ENCODE measurements at regions of chr2 and their contacts with region 1.

Region 1: GRCh38 chr2:41657226-41657625 is 390.6 kb upstream of the PKDCC start:
- DNase-seq: no peak
- ATAC-seq: no peak
- H3K4me3 Mint-ChIP-seq: no peak overlapping the region
- H3K27ac Mint-ChIP-seq: no peak overlapping the region
- H3K4me1 Mint-ChIP-seq: no peaks in the 10 kb centered on the region
- H3K27me3 Mint-ChIP-seq: no peaks in the 10 kb centered on the region
- CTCF ChIP-seq: no peak

Region 2: GRCh38 chr2:41598161-41598894 is 58.9 kb before region 1 on chr2:
- CTCF ChIA-PET with region 1: no interaction called
- POLR2A ChIA-PET with region 1: no interaction called
- intact Hi-C with region 1: loop called (anchors 10 kb)
- DNase-seq: no peak
- ATAC-seq: no peak
- H3K4me3 Mint-ChIP-seq: no peak overlapping the region
- H3K27ac Mint-ChIP-seq: no peak overlapping the region
- H3K4me1 Mint-ChIP-seq: no peaks in the 10 kb centered on the region
- H3K27me3 Mint-ChIP-seq: no peaks in the 10 kb centered on the region
- CTCF ChIP-seq: no peak

Region 3: GRCh38 chr2:41621563-41621962 is 35.7 kb before region 1 on chr2:
- CTCF ChIA-PET with region 1: no interaction called
- POLR2A ChIA-PET with region 1: no interaction called
- intact Hi-C with region 1: no loop called
- DNase-seq: no peak
- ATAC-seq: no peak
- H3K4me3 Mint-ChIP-seq: no peak overlapping the region
- H3K27ac Mint-ChIP-seq: no peak overlapping the region
- H3K4me1 Mint-ChIP-seq: no peaks in the 10 kb centered on the region
- H3K27me3 Mint-ChIP-seq: peaks cover 3% of the 10 kb centered on the region
- CTCF ChIP-seq: no peak

Region 4: DNA sequence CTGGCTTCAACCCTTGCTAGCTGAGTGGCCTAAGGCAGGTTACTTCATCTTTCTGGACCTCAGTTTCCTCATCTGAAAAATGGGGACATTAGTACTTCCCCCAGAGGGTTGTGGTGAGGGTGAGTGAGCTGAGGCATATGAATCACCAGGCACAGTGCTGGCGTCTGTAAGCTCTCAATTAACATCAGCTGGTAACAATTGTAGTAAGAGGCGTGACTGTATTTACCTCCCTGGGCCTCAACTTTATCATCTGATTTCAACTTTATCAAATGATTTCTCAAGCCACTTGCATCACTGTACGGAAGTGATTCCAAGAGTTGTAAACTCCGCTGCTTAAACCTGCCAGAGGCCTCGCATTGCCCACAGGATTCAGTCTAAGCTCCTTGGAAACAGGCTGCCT is 337.0 kb after region 1 on chr2:
- CTCF ChIA-PET with region 1: no interaction called
- POLR2A ChIA-PET with region 1: no interaction called
- intact Hi-C with region 1: no loop called
- DNase-seq: no peak
- ATAC-seq: peak; percentile 42
- H3K4me3 Mint-ChIP-seq: no peak overlapping the region
- H3K27ac Mint-ChIP-seq: no peak overlapping the region
- H3K4me1 Mint-ChIP-seq: peaks cover 2% of the 10 kb centered on the region
- H3K27me3 Mint-ChIP-seq: peaks cover 7% of the 10 kb centered on the region
- CTCF ChIP-seq: no peak

Measured in activated CD8-positive, alpha-beta T cell treated with anti-CD3 and anti-CD28 coated beads for 36 hours (primary cell).